Right cardiac atrium (tissue), 5 donors: ENCODE measurements at regions of chr11 and their contacts with region 1.

Region 1: DNA sequence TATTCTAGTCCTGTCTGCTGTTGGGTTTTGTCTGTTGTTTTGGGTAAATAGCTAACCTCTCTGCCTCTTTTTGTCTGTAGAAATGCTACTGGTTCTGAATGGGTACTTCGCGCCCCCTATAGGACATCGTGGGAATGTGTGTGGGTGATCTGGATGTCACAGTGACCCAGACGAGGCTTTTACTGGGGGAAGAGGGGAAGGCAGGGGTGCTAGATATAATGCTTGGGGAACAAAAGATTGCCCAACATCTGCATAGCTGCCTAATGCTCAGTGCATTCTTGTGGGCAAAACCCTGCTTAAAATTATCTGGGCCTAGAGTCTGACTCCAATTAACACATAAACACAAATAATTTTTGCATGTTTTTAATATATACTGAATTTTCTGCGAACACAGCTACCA is 57.7 kb downstream of the BMAL1 start:
- DNase-seq: peak in 2 of 3 donors; percentile 58 to 86
- ATAC-seq: peak; percentile 20 to 38
- H3K4me3 ChIP-seq: no peak overlapping the region
- H3K27ac ChIP-seq: no peak overlapping the region
- H3K4me1 ChIP-seq: peaks cover 20% of the 10 kb centered on the region
- H3K27me3 ChIP-seq: no peaks in the 10 kb centered on the region

Region 2: DNA sequence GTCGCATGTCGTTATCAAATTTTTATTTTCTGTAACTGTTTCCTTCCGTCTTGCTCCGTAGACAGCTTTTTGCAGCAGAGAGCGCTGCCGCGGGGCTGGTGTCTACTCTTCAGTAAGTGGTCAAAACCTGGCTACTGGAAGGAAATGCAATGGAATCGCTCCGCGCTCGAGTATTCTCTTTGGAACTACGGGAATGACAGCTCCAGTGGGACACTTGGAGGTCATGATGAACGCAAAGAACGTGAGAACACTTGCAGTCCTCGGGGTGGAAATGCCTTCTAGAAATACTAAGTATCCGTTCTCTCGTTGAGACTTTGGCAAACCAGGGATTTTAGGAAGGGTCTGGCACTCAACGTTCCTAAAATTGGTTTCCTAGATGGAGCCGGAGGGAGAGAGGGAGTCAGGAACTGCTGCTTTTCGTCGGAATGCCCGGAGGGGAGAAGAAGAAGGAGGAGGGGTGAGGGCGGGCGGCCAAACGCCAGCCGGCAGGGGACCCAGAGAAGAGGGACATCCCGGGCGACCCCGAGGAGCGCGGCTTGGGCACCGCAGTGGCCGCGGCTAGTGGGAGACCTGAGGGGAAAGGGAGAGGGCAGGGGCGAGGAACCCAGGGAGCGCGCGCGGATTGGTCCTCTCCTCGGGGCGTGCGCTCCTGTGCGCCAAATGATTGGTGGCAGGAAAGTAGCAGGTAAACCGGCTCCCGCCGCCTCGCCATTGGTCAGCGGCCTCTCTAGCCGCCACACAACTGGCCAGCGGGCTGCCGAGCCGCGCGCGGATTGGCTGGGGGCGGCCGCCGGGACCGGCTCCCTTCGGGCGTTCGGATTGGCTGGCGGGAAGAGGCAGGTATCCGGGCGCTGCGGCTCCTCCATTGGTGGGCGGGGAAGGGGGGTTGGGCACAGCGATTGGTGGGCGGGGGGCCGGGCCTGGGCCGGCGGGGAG is 58.2 kb before region 1 on chr11:
- intact Hi-C with region 1: loop called in 2 of 4 experiments (anchors 5 to 10 kb)
- DNase-seq: peak; percentile 99 to 100 (median 99)
- ATAC-seq: peak; percentile 98
- H3K4me3 ChIP-seq: peak overlapping the region; percentile 94
- H3K27ac ChIP-seq: peak overlapping the region; percentile 81
- H3K4me1 ChIP-seq: peaks cover 7% of the 10 kb centered on the region
- H3K27me3 ChIP-seq: no peaks in the 10 kb centered on the region

Region 3: DNA sequence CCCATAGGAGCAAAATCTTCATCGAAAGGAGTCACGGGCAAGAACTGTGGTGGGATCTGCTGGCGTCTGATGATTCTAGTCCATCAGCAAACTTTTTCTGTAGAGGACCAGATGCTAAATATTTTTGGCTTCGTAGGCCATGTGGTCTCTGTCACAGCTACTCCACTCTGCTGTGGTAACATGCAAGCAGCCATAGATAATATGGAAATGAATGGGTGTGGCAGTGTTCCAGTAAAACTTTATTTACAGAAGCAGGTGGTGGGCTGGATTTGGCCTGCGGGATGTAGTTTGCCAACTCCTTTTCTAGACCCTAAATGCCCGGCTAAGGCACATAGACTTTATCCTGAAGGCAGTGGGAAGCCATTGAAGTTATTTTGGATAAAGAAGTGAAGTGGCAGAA is 24.9 kb before region 1 on chr11:
- intact Hi-C with region 1: loop called in 1 of 4 experiments (anchors 1 kb)
- DNase-seq: no peak
- ATAC-seq: no peak
- H3K4me3 ChIP-seq: no peak overlapping the region
- H3K27ac ChIP-seq: no peak overlapping the region
- H3K4me1 ChIP-seq: peaks cover 20% of the 10 kb centered on the region
- H3K27me3 ChIP-seq: no peaks in the 10 kb centered on the region